ENCODE measurements at regions of chr9 and their contacts with region 1.

Region 1: GRCh38 chr9:124040935-124041816 is 29.6 kb downstream of the LHX2 start:
- DNase-seq: peak; percentile 79
- ATAC-seq: peak; percentile 73

Region 2: DNA sequence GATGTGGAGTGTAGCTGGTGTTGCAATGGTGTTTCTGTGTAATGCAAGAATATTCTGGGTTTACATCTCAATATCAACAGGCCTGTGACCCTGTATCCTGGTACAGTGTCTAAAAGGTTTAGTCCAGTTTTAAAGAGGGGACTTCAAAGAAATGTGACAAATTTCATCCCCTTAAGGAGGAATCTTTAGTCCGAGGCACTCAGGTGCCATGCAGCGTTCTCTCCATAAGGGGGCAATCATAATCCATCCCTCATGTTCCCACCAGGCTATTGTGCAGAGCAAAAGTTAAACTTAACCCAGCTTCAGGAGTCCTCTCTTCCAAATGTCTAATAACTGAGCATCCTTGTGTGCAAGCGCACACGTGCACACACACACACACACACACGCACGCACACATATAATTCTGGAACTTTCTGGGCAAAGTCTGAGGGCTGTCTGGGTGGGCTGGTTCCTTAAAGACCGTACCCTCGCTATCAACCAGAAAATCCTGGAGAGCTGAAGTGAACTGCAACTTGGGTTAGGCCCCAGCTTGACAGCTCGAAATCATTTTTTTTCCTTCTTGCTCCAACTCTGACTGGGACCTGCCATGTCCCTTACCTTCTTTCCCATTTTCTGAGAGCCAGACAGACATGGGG is 639.2 kb before region 1 on chr9:
- intact Hi-C with region 1: loop called (anchors 10 kb)
- DNase-seq: no peak
- ATAC-seq: peak; percentile 91

Region 3: GRCh38 chr9:123544007-123544827 is 497.0 kb before region 1 on chr9:
- intact Hi-C with region 1: loop called (anchors 5 kb)
- DNase-seq: no peak
- ATAC-seq: peak; percentile 57

Region 4: GRCh38 chr9:123724211-123724796 is 316.9 kb before region 1 on chr9:
- intact Hi-C with region 1: loop called (anchors 10 kb)
- DNase-seq: no peak
- ATAC-seq: peak; percentile 67

Region 5: DNA sequence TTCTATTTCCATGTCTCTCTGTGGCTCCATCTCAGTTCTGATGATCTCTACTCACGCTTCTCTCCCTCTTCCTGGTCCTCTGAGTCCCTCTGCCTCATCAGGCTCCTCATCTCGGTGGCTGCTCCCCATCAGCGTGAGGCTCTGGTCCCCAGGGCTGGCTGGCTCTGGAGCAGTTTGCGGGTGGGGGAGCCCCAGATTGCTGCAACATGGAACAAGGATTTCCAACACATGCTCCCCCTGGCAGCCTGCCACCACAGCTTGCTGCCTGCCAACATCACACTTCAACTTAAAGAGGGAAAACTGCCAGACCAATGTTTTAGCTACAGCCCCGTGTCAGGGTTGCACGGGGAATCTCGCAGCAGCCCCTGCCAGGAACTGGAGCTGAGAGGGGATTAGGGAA is 139.4 kb after region 1 on chr9:
- intact Hi-C with region 1: no loop called
- DNase-seq: peak; percentile 71
- ATAC-seq: no peak